Activated CD8-positive, alpha-beta memory T cell treated with anti-CD3 and anti-CD28 coated beads, Interleukin-2, amount 10 ng/mL, durations not matched to agents 7 days and 5 days (primary cell): ENCODE measurements at regions of chr17 and their contacts with region 1.

Region 1: DNA sequence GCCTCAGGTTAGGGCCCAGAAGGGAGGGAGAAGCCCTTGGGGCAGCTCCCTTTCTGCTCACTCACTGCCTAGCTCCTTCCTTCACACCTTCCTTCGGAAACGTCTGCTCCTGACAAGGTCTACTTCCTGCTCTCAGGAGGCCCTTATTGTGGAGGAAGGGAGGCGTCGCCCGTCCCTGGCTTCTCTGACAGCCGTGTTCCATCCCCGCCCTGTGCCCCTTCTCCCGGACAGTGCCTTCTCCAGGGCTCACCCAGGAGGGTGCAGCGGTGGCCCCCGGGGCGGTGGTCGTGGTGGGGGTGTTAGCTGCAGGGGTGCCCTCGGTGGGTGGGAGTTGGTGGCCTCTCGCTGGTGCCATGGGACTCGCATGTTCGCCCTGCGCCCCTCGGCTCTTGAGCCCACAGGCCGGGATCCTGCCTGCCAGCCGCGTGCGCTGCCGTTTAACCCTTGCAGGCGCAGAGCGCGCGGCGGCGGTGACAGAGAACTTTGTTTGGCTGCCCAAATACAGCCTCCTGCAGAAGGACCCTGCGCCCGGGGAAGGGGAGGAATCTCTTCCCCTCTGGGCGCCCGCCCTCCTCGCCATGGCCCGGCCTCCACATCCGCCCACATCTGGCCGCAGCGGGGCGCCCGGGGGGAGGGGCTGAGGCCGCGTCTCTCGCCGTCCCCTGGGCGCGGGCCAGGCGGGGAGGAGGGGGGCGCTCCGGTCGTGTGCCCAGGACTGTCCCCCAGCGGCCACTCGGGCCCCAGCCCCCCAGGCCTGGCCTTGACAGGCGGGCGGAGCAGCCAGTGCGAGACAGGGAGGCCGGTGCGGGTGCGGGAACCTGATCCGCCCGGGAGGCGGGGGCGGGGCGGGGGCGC is 231.9 kb downstream of the SEC14L1 start:
- DNase-seq: peak; percentile 82
- ATAC-seq: peak; percentile 57
- H3K4me3 Mint-ChIP-seq: peak overlapping the region; percentile 66
- H3K27ac Mint-ChIP-seq: peak overlapping the region; percentile 73
- H3K4me1 Mint-ChIP-seq: peaks cover 44% of the 10 kb centered on the region
- H3K27me3 Mint-ChIP-seq: no peaks in the 10 kb centered on the region

Region 2: DNA sequence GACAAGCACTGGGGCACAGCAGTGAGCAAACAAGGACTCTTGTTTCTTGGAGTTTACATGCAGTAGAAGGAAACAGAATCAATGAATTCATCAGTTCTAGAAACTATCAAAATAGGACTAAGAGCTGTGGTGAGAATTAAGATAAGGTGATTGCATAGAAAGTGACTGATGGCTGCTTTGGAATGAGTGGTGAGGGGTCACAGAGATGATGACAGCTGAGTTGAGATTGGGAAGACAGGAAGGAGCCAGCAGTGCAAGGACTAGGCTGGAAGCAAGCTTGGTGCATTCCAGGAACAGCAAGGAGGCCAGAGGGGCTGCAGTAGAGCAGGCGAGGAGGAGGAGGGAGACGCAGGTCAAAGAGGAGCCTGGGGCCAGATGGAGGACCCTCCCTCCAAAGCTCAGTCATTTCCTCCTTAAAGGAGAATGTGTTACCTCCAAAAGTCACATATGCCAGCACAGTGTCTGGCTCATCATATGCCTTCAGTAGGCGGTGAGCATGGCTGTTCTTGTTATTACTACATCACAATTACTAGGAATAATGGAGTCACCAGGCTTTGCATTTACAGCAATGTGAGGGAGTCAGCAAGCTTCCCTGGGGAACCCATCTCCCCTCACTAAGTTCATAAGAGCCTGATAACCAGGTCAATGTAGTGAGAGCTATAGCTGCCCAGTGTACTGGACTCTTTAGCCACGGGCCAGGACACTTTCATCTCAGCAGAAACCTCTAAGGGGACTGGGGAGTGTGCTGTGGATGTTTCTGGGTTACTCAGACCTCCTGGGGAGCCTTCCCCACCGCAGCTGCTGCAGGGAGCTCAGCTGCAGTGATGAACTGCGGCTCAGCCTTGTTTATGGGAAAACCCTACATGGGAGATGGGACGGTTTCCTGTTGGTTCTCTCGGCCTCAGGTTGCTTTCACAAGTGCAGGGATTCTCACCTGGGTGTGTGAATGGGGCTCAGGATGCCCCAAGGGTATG is 74.7 kb before region 1 on chr17:
- CTCF ChIA-PET with region 1: no interaction called
- DNase-seq: no peak
- ATAC-seq: no peak
- H3K4me3 Mint-ChIP-seq: no peak overlapping the region
- H3K27ac Mint-ChIP-seq: no peak overlapping the region
- H3K4me1 Mint-ChIP-seq: no peaks in the 10 kb centered on the region
- H3K27me3 Mint-ChIP-seq: peaks cover 3% of the 10 kb centered on the region

Region 3: DNA sequence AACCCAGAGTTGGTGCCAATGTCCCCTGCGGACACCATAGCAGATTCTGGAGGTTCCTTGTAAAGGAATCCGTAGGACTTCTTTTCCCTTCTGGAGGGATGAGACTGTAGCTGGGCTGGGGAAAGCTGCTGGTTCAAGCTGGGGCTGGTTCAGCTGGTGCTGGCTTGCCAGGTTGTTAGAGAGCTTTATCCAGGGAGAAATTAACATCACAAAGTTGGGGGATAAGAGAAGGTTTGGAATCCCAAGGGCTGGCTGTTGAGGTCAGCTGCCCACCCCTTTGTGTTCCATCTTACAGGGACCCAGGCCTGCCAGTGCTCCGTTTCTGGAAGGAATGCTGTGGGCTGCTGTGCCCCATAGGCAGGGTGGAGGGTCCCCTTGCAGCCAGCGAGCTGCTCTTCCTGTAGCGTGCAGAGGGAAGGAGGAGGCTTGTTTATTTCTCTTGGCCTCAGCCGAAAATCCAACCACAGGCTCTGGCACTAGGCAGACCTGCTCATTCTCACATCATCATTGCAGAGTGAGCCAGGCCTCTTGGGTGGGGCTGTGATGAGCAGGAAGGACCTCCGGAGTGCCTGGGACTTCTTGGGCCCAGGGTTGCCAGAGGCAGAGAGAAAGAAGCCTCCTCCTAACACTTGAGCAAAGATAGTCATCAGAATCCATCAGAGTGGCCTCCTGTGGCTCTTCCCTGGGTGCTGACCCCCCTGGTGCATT is 19.2 kb after region 1 on chr17:
- CTCF ChIA-PET with region 1: interaction called, 52 read pairs
- DNase-seq: peak; percentile 81
- ATAC-seq: peak; percentile 37
- H3K4me3 Mint-ChIP-seq: peak overlapping the region; percentile 42
- H3K27ac Mint-ChIP-seq: peak overlapping the region; percentile 82
- H3K4me1 Mint-ChIP-seq: peaks cover 72% of the 10 kb centered on the region
- H3K27me3 Mint-ChIP-seq: no peaks in the 10 kb centered on the region